CD14-positive monocyte (primary cell): ENCODE measurements at regions of chr9 and their contacts with region 1.

Region 1: GRCh38 chr9:137295238-137295811 is 6.7 kb downstream of the NRARP start:
- DNase-seq: peak in 2 of 3 donors; percentile 29 to 41
- H3K4me3 ChIP-seq: peak overlapping the region in 1 of 3 experiments; percentile 54
- H3K4me3 Mint-ChIP-seq: peak overlapping the region; percentile 34 to 74
- H3K27ac ChIP-seq: no peak overlapping the region
- H3K27ac Mint-ChIP-seq: peak overlapping the region in 1 of 7 donors; percentile 25
- H3K4me1 ChIP-seq: peaks cover 6 to 9% of the 10 kb centered on the region in 2 donors
- H3K4me1 Mint-ChIP-seq: peaks cover 13% of the 10 kb centered on the region
- H3K27me3 ChIP-seq: peaks cover 35 to 67% of the 10 kb centered on the region in 2 donors
- H3K27me3 Mint-ChIP-seq: peaks cover 68 to 70% (median 69%) of the 10 kb centered on the region in 3 donors
- CTCF ChIP-seq: peak; percentile 74

Region 2: DNA sequence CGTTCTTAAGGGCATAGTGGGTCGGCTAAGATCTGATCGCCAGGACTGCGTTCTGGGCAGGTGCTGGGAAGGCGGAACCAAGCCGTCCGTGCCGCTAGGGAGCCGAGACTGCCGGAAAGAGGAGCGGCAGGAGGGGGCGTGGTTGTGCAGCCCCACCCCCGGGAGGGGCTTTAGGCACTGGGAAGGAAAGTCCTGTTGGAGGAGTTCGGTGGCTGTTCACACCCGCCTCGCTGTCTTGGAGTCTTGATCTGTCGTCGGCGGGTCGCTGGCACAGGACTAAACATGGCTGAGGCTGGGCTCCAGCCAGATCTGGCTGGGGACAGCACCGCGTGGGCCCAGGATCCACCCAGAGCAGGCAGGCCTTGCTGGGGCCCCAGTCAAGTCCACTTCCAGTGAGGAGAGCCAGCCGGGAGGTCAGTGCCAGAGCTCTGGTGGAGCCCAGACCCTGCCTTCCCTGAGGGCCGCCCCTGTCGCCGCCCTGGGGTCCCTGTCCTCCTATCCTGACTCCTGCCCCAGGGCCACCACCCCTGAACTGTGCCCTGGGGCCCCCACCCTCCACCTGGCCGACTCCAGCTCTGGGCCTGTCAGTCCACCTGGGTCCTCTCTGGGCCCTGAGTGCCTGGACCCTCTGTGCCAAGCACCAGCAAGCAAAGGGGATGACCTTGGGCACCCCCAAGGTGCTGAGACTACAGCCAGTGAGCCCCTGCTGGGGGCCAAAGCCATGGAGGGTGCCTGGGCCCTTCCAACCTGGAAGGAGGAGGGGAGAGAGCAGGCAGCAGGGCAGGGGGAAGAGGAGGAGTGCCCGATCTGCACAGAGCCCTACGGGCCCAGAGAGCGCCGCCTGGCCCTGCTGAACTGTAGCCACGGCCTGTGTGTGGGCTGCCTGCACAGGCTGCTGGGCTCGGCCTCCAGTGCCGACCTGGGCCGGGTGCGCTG is 77.8 kb before region 1 on chr9:
- intact Hi-C with region 1: no loop called
- DNase-seq: no peak
- H3K4me3 ChIP-seq: no peak overlapping the region
- H3K4me3 Mint-ChIP-seq: peak overlapping the region; percentile 19 to 35
- H3K27ac ChIP-seq: no peak overlapping the region
- H3K27ac Mint-ChIP-seq: peak overlapping the region in 1 of 7 donors; percentile 54
- H3K4me1 ChIP-seq: peaks cover 11 to 29% of the 10 kb centered on the region in 2 donors
- H3K4me1 Mint-ChIP-seq: peaks cover 5% of the 10 kb centered on the region
- H3K27me3 ChIP-seq: peaks cover 0 to 14% of the 10 kb centered on the region in 2 donors
- H3K27me3 Mint-ChIP-seq: peaks cover 3 to 18% (median 10%) of the 10 kb centered on the region in 3 donors
- CTCF ChIP-seq: no peak

Region 3: GRCh38 chr9:137240297-137240860 is 54.9 kb before region 1 on chr9:
- intact Hi-C with region 1: no loop called
- DNase-seq: peak; percentile 42 to 65 (median 53)
- H3K4me3 ChIP-seq: peak overlapping the region; percentile 52 to 80 (median 59)
- H3K4me3 Mint-ChIP-seq: peak overlapping the region; percentile 67 to 76
- H3K27ac ChIP-seq: peak overlapping the region; percentile 68 to 82
- H3K27ac Mint-ChIP-seq: peak overlapping the region; percentile 6 to 84 (median 45)
- H3K4me1 ChIP-seq: peaks cover 49 to 63% of the 10 kb centered on the region in 2 donors
- H3K4me1 Mint-ChIP-seq: peaks cover 47% of the 10 kb centered on the region
- H3K27me3 ChIP-seq: no peaks in the 10 kb centered on the region
- H3K27me3 Mint-ChIP-seq: peaks cover 2 to 3% (median 2%) of the 10 kb centered on the region in 3 donors
- CTCF ChIP-seq: peak; percentile 20

Region 4: DNA sequence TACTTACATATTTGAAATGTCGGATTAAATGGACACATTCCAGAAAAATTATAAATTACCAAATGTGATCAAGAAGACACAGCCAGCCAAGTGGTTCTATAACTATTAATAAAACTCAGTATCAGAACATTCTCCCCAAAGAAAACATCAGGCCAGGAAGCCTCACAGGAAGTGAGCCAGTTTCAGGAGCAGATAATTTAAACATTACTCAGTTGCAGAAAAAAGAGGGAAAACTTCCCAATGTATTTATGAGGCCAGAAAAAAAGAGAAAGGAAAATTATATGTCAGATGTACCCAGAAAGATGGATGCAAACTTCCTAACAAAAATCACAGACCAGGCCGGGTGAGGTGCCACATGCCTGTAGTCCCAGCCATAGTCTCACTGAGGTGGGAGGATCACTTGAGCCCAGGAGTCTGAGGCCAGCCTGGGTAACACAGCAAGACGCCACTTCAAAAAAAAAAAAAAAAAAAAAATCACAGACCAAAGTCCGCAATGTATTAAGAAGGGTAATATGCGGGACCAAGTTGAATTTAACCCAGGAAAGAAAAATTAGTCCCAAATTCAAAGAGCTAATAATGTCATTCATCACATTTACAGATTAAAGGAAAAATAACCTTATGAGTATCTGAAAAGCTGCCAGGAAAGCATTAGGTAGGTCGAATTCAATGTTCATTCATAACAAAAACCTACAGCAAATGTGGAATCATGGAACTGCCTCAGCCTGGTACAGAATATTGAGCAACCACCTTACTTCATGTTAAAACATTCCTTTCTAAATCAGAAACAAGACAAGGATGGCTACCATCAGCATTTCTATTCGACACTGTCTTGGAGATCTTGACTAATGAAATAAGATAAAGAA is 44.0 kb after region 1 on chr9:
- intact Hi-C with region 1: loop called in 1 of 2 experiments (anchors 2 kb)
- DNase-seq: no peak
- H3K4me3 ChIP-seq: no peak overlapping the region
- H3K4me3 Mint-ChIP-seq: no peak overlapping the region
- H3K27ac ChIP-seq: no peak overlapping the region
- H3K27ac Mint-ChIP-seq: no peak overlapping the region
- H3K4me1 ChIP-seq: no peaks in the 10 kb centered on the region
- H3K4me1 Mint-ChIP-seq: no peaks in the 10 kb centered on the region
- H3K27me3 ChIP-seq: no peaks in the 10 kb centered on the region
- H3K27me3 Mint-ChIP-seq: peaks cover 0 to 6% (median 3%) of the 10 kb centered on the region in 3 donors
- CTCF ChIP-seq: no peak

Region 5: DNA sequence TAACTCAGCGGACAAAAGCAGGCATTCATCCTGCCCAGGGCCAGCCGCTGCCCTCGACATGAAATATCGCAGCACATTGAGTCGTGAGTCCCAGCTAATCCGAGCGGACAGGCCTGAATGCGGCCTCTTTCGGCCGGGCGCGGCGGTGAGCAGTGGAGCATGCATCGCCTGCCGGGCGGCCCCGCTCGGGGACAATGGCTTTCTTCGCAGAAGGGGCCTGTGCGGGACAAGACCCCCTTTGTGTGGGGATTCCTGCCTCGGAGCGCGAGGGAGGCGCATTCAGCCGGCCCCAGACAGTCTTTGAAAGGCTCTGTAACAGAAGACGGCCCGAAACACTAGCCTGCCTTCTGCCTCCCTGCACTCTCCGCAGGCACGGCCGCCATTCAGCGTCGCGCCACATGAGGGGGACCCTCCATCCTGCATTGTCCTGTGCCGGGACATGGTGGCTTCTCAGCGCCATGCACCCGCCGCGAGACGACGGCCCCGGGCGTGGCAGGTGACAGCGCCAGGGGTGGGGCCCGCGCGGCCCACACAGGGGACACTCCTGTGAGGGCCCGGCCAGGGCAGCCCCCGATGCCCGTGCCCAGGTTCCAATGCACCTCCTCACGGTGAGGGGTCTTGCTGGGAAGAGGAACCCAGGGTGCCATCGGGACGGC is 75.7 kb after region 1 on chr9:
- intact Hi-C with region 1: no loop called
- DNase-seq: no peak
- H3K4me3 ChIP-seq: no peak overlapping the region
- H3K4me3 Mint-ChIP-seq: no peak overlapping the region
- H3K27ac ChIP-seq: no peak overlapping the region
- H3K27ac Mint-ChIP-seq: no peak overlapping the region
- H3K4me1 ChIP-seq: no peaks in the 10 kb centered on the region
- H3K4me1 Mint-ChIP-seq: no peaks in the 10 kb centered on the region
- H3K27me3 ChIP-seq: no peaks in the 10 kb centered on the region
- H3K27me3 Mint-ChIP-seq: no peaks in the 10 kb centered on the region
- CTCF ChIP-seq: no peak

Region 6: GRCh38 chr9:137406876-137407589 is 111.7 kb after region 1 on chr9:
- intact Hi-C with region 1: loop called in 1 of 2 experiments (anchors 2 kb)
- DNase-seq: peak in 2 of 3 donors; percentile 43 to 66
- H3K4me3 ChIP-seq: no peak overlapping the region
- H3K4me3 Mint-ChIP-seq: peak overlapping the region in 1 of 2 donors; percentile 30
- H3K27ac ChIP-seq: no peak overlapping the region
- H3K27ac Mint-ChIP-seq: no peak overlapping the region
- H3K4me1 ChIP-seq: peaks cover 13% of the 10 kb centered on the region in 2 donors
- H3K4me1 Mint-ChIP-seq: peaks cover 11% of the 10 kb centered on the region
- H3K27me3 ChIP-seq: peaks cover 9 to 34% of the 10 kb centered on the region in 2 donors
- H3K27me3 Mint-ChIP-seq: peaks cover 28 to 57% (median 35%) of the 10 kb centered on the region in 3 donors
- CTCF ChIP-seq: peak; percentile 76

Region 7: GRCh38 chr9:137445275-137445807 is 150.0 kb after region 1 on chr9:
- intact Hi-C with region 1: loop called in 1 of 2 experiments (anchors 10 kb)
- DNase-seq: peak; percentile 89 to 94 (median 91)
- H3K4me3 ChIP-seq: no peak overlapping the region
- H3K4me3 Mint-ChIP-seq: peak overlapping the region in 1 of 2 donors; percentile 52
- H3K27ac ChIP-seq: no peak overlapping the region
- H3K27ac Mint-ChIP-seq: peak overlapping the region in 6 of 7 donors; percentile 69 to 91 (median 80)
- H3K4me1 ChIP-seq: peaks cover 47 to 61% of the 10 kb centered on the region in 2 donors
- H3K4me1 Mint-ChIP-seq: peaks cover 39% of the 10 kb centered on the region
- H3K27me3 ChIP-seq: peaks cover 5 to 11% of the 10 kb centered on the region in 2 donors
- H3K27me3 Mint-ChIP-seq: peaks cover 11 to 21% (median 18%) of the 10 kb centered on the region in 3 donors
- CTCF ChIP-seq: peak; percentile 80

Region 8: GRCh38 chr9:137521405-137521985 is 226.2 kb after region 1 on chr9:
- intact Hi-C with region 1: loop called in 1 of 2 experiments (anchors 10 kb)
- DNase-seq: no peak
- H3K4me3 ChIP-seq: no peak overlapping the region
- H3K4me3 Mint-ChIP-seq: no peak overlapping the region
- H3K27ac ChIP-seq: no peak overlapping the region
- H3K27ac Mint-ChIP-seq: no peak overlapping the region
- H3K4me1 ChIP-seq: no peaks in the 10 kb centered on the region
- H3K4me1 Mint-ChIP-seq: peaks cover 2% of the 10 kb centered on the region
- H3K27me3 ChIP-seq: no peaks in the 10 kb centered on the region
- H3K27me3 Mint-ChIP-seq: peaks cover 0 to 2% (median 2%) of the 10 kb centered on the region in 3 donors
- CTCF ChIP-seq: no peak